WTC11 (cell line): ENCODE measurements at regions of chr15 and their contacts with region 1.

Region 1: DNA sequence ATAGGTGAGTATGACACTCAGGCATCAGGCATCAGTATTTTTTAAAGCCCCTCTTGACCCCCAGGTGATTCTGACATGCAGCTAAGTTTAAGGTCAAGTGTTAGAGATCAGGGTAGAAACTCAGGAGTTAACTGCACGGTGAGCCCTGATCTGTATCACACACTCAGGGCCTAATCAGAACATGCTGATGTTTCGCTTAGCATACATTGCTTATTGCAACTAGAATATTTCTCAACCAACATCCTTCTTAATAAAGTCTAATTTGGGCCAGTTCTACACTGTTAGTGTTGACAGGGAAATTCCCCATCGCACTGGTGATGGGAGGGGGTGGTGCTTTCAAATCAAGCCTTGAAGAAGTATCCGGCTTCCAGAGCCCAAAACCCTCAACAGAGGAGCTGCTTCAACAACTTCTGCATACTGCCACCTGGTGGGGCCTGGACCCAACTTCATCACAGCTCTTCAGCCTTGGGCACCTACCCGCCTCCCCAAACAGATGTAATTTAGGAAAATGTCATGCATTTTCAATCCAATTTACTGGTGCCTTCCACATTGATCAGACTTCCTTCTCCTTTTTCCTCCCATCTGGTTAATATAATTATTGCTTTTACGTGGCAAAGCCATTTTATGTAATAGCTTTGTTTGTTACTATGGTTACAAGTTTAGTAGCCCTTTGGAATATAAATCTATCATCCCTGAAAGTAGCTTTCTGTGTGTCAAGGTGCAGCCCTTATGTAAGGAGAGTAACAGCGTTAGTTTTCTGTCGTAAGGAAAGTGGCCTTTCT is 312.2 kb downstream of the RORA start:
- DNase-seq: peak; percentile 90
- ATAC-seq: peak; percentile 95
- H3K4me3 Mint-ChIP-seq: no peak overlapping the region
- H3K27ac Mint-ChIP-seq: no peak overlapping the region
- H3K4me1 Mint-ChIP-seq: peaks cover 42% of the 10 kb centered on the region
- H3K27me3 Mint-ChIP-seq: no peaks in the 10 kb centered on the region
- CTCF ChIP-seq: peak; percentile 68; the same call in 1 of the 2 replicates

Region 2: GRCh38 chr15:60520825-60521368 is 396.0 kb before region 1 on chr15:
- CTCF ChIA-PET with region 1: interaction called, 12 read pairs
- POLR2A ChIA-PET with region 1: no interaction called
- DNase-seq: peak; percentile 83
- ATAC-seq: peak; percentile 87
- H3K4me3 Mint-ChIP-seq: no peak overlapping the region
- H3K27ac Mint-ChIP-seq: no peak overlapping the region
- H3K4me1 Mint-ChIP-seq: peaks cover 15% of the 10 kb centered on the region
- H3K27me3 Mint-ChIP-seq: no peaks in the 10 kb centered on the region
- CTCF ChIP-seq: peak; percentile 77

Region 3: GRCh38 chr15:60672400-60672799 is 244.5 kb before region 1 on chr15:
- CTCF ChIA-PET with region 1: interaction called, 14 read pairs
- POLR2A ChIA-PET with region 1: no interaction called
- DNase-seq: no peak
- ATAC-seq: peak; percentile 42
- H3K4me3 Mint-ChIP-seq: no peak overlapping the region
- H3K27ac Mint-ChIP-seq: no peak overlapping the region
- H3K4me1 Mint-ChIP-seq: peaks cover 32% of the 10 kb centered on the region
- H3K27me3 Mint-ChIP-seq: no peaks in the 10 kb centered on the region; the same call in 1 of the 2 replicates
- CTCF ChIP-seq: no peak

Region 4: DNA sequence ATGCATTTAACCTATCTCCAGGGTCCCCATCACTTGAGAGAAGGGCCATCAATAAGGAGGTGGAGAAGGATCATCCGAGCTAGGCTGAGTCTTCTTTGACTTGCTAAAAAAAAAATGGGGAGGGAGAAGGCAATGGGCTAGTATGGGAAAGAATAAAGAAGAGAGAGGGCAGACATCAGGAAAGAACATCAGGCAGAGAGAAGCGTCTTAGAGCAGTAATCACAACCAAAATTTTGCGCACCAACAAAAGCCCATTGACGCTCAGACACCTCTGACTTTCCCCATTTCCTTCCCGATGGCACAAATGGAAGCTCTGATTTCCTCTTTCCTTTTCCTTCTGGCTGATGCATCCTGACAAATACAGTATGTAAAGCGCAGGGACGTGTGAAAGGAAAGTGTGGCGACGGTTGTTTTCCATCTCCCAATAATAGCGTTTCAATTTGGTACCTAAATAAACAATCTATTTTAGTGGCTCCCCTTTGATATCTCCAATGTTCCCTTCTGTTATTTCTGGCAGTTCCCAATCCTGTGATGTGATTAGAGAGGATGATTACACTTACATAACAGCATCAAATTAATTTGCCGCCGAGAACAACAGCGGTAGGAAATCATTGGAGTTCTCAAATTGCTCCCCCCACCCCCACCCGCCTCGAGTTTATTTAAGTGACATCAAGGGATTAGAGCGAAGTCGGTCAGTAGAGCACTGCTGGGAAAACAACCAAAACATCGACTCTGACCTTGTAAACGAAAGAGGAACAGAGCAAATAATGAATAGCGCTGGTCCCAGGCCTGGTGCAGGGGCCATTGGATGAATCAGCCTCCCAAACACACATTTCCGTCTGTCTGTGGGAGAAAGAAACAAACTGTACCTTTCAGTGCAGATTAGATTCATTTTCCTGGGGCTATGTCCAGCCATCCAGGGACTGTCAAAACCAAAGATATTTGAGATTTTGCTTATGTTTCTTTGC is 164.6 kb before region 1 on chr15:
- CTCF ChIA-PET with region 1: no interaction called
- POLR2A ChIA-PET with region 1: no interaction called
- DNase-seq: no peak
- ATAC-seq: no peak
- H3K4me3 Mint-ChIP-seq: no peak overlapping the region
- H3K27ac Mint-ChIP-seq: no peak overlapping the region
- H3K4me1 Mint-ChIP-seq: peaks cover 13% of the 10 kb centered on the region
- H3K27me3 Mint-ChIP-seq: no peaks in the 10 kb centered on the region; the same call in 1 of the 2 replicates
- CTCF ChIP-seq: no peak

Region 5: DNA sequence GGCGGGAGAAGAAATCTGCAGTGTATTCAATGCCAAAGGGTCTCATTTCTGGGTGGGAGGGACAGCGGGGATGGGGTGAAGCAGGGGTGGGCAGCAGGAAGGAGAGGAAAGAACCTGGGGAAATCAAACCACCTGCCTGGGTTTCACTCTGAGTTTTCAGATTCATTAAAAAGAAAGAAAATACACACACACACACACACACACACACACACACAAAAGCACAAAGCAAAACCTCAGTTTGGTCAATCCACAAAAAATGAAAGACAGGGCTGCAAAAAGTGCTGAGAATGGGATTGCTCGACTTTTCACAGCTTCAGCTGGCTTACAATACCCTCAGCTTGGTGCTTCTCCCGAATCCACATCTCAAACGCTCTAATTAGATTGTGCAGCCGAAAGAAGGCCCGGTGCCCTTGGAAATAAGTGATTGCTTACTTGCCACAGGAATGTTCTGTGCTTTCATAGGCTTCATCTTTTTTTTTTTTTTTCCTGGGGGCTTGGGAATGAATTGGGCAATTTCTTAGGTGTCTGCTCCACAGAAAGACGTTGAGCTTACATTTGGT is 58.3 kb before region 1 on chr15:
- CTCF ChIA-PET with region 1: interaction called, 22 read pairs
- POLR2A ChIA-PET with region 1: no interaction called
- DNase-seq: no peak
- ATAC-seq: peak; percentile 82
- H3K4me3 Mint-ChIP-seq: no peak overlapping the region
- H3K27ac Mint-ChIP-seq: no peak overlapping the region
- H3K4me1 Mint-ChIP-seq: peaks cover 26% of the 10 kb centered on the region
- H3K27me3 Mint-ChIP-seq: peaks cover 4% of the 10 kb centered on the region
- CTCF ChIP-seq: no peak

Region 6: GRCh38 chr15:60905587-60905986 is 11.3 kb before region 1 on chr15:
- CTCF ChIA-PET with region 1: interaction called, 35 read pairs
- POLR2A ChIA-PET with region 1: interaction called, 3 read pairs
- DNase-seq: peak; percentile 49
- ATAC-seq: peak; percentile 96
- H3K4me3 Mint-ChIP-seq: no peak overlapping the region
- H3K27ac Mint-ChIP-seq: no peak overlapping the region
- H3K4me1 Mint-ChIP-seq: peaks cover 36% of the 10 kb centered on the region
- H3K27me3 Mint-ChIP-seq: no peaks in the 10 kb centered on the region
- CTCF ChIP-seq: no peak